ENCODE measurements at regions of chr19 and their contacts with region 1.

Region 1: GRCh38 chr19:57527136-57527881 is at the start of gene ZNF549:
- DNase-seq: peak; percentile 76 to 92 (median 85)
- ATAC-seq: peak; percentile 99 to 100 (median 99)
- H3K4me3 ChIP-seq: peak within 1 kb of the TSS; percentile 82 to 84
- H3K4me3 Mint-ChIP-seq: peak within 1 kb of the TSS; percentile 97 to 99 (median 98)
- H3K27ac ChIP-seq: peak within 1 kb of the TSS; percentile 80
- H3K27ac Mint-ChIP-seq: peak within 1 kb of the TSS; percentile 89 to 91
- H3K4me1 ChIP-seq: peaks cover 8 to 19% of the 10 kb centered on the region in 2 experiments
- H3K4me1 Mint-ChIP-seq: peaks cover 20 to 31% (median 27%) of the 10 kb centered on the region in 3 donors
- H3K27me3 ChIP-seq: peaks cover 0 to 2% of the 10 kb centered on the region in 2 experiments
- H3K27me3 Mint-ChIP-seq: no peaks in the 10 kb centered on the region
- total RNA-seq, gene ZNF549: 9.0 to 17.4 (median 16.0) TPM

Region 2: GRCh38 chr19:57773537-57773936 is 246.2 kb after region 1 on chr19:
- CTCF ChIA-PET with region 1: no interaction called
- POLR2A ChIA-PET with region 1: interaction called in 1 of 2 experiments, 19 read pairs
- DNase-seq: no peak
- ATAC-seq: no peak
- H3K4me3 ChIP-seq: peak overlapping the region in 1 of 2 donors; percentile 17
- H3K4me3 Mint-ChIP-seq: peak overlapping the region in 1 of 3 donors; percentile 88
- H3K27ac ChIP-seq: no peak overlapping the region
- H3K27ac Mint-ChIP-seq: no peak overlapping the region
- H3K4me1 ChIP-seq: peaks cover 4 to 27% of the 10 kb centered on the region in 2 experiments
- H3K4me1 Mint-ChIP-seq: peaks cover 37 to 53% (median 42%) of the 10 kb centered on the region in 3 donors
- H3K27me3 ChIP-seq: no peaks in the 10 kb centered on the region
- H3K27me3 Mint-ChIP-seq: no peaks in the 10 kb centered on the region